Activated CD8-positive, alpha-beta T cell treated with anti-CD3 and anti-CD28 coated beads for 36 hours (primary cell): ENCODE measurements at regions of chr11 and their contacts with region 1.

Region 1: DNA sequence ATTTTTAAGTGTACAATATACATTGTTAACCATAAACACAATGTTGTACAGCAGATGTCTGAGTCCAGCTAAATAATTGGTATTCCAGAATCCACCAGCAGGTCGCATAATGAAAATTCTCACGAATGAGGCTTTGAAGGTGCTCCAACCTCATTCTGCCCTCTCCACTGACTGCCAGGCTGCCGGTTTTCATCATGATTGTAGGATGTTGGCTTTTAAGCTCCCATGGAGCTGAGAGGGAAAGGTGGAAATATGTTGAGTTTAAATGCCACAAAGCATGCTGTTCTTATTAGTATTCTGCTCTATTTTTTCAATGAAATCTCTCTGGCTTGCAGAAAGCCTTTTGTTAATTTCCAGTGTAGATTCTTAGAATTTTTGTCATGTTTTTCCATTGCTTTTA is 337.2 kb upstream of the DDI1 start:
- DNase-seq: no peak
- ATAC-seq: no peak
- H3K4me3 Mint-ChIP-seq: no peak overlapping the region
- H3K27ac Mint-ChIP-seq: no peak overlapping the region
- H3K4me1 Mint-ChIP-seq: no peaks in the 10 kb centered on the region
- H3K27me3 Mint-ChIP-seq: no peaks in the 10 kb centered on the region
- CTCF ChIP-seq: no peak

Region 2: GRCh38 chr11:103586756-103587155 is 112.5 kb before region 1 on chr11:
- CTCF ChIA-PET with region 1: no interaction called
- POLR2A ChIA-PET with region 1: no interaction called
- intact Hi-C with region 1: no loop called
- DNase-seq: no peak
- ATAC-seq: no peak
- H3K4me3 Mint-ChIP-seq: no peak overlapping the region
- H3K27ac Mint-ChIP-seq: no peak overlapping the region
- H3K4me1 Mint-ChIP-seq: no peaks in the 10 kb centered on the region
- H3K27me3 Mint-ChIP-seq: peaks cover 5% of the 10 kb centered on the region
- CTCF ChIP-seq: no peak

Region 3: GRCh38 chr11:103682318-103683184 is 16.7 kb before region 1 on chr11:
- CTCF ChIA-PET with region 1: interaction called, 16 read pairs
- POLR2A ChIA-PET with region 1: no interaction called
- intact Hi-C with region 1: no loop called
- DNase-seq: peak; percentile 39
- ATAC-seq: peak; percentile 84
- H3K4me3 Mint-ChIP-seq: no peak overlapping the region
- H3K27ac Mint-ChIP-seq: no peak overlapping the region
- H3K4me1 Mint-ChIP-seq: peaks cover 2% of the 10 kb centered on the region
- H3K27me3 Mint-ChIP-seq: peaks cover 5% of the 10 kb centered on the region
- CTCF ChIP-seq: peak; percentile 66

Region 4: DNA sequence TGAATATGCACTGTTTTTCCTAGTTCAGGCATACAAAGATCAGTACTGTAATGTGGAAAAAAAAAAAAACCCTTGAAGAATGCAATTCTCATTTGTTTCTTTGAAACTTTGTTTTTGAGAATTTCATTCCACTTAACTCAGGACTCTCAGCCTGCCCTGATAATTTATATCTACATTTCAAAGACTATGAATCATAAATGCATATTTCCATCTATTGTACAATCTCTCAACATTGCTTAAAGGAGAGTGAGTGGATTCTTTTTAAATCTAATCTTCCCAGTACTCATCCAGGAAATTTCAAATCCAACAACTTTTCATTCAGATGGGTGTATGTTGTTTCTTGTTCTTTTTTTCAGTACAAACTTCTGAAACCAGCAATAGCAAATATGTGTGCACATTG is 15.0 kb after region 1 on chr11:
- CTCF ChIA-PET with region 1: no interaction called
- POLR2A ChIA-PET with region 1: no interaction called
- intact Hi-C with region 1: no loop called
- DNase-seq: no peak
- ATAC-seq: no peak
- H3K4me3 Mint-ChIP-seq: no peak overlapping the region
- H3K27ac Mint-ChIP-seq: no peak overlapping the region
- H3K4me1 Mint-ChIP-seq: no peaks in the 10 kb centered on the region
- H3K27me3 Mint-ChIP-seq: no peaks in the 10 kb centered on the region
- CTCF ChIP-seq: no peak